Caco-2 (cell line): ENCODE measurements at regions of chr14 and their contacts with region 1.

Region 1: DNA sequence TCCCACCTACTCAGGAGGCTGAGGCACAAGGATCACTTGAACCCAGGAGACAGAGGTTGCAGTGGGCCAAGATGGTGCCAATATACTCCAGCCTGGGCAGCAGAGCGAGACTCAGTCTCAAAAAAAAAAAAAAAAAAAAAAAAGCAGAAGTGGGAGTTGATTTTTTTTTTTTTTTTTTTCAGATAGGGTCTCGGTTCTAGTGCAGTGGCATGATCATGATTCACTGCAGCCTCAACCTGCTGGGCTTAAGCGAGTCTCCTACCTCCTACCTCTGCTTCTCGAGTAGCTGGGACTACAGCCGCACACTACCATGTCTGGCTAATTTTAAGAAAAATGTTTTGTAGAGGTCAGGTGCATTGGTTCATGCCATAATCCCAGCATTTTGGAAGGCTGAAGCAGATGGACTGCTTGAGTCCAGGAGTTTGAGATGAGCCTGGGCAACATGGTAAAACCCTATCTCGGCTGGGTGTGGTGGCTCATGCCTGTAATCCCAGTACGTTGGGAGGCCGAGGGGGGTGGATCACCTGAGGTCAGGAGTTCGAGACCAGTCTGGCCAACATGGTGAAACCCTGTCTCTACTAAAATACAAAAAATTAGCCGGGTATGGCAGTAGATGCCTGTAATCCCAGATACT is 16.3 kb upstream of the HSP90AA1 start:
- DNase-seq: no peak
- H3K4me3 ChIP-seq: no peak overlapping the region
- H3K4me3 Mint-ChIP-seq: no peak overlapping the region
- H3K27ac Mint-ChIP-seq: no peak overlapping the region
- H3K4me1 ChIP-seq: peaks cover 6% of the 10 kb centered on the region
- H3K4me1 Mint-ChIP-seq: no peaks in the 10 kb centered on the region
- H3K27me3 ChIP-seq: no peaks in the 10 kb centered on the region
- H3K27me3 Mint-ChIP-seq: no peaks in the 10 kb centered on the region
- CTCF ChIP-seq: no peak

Region 2: DNA sequence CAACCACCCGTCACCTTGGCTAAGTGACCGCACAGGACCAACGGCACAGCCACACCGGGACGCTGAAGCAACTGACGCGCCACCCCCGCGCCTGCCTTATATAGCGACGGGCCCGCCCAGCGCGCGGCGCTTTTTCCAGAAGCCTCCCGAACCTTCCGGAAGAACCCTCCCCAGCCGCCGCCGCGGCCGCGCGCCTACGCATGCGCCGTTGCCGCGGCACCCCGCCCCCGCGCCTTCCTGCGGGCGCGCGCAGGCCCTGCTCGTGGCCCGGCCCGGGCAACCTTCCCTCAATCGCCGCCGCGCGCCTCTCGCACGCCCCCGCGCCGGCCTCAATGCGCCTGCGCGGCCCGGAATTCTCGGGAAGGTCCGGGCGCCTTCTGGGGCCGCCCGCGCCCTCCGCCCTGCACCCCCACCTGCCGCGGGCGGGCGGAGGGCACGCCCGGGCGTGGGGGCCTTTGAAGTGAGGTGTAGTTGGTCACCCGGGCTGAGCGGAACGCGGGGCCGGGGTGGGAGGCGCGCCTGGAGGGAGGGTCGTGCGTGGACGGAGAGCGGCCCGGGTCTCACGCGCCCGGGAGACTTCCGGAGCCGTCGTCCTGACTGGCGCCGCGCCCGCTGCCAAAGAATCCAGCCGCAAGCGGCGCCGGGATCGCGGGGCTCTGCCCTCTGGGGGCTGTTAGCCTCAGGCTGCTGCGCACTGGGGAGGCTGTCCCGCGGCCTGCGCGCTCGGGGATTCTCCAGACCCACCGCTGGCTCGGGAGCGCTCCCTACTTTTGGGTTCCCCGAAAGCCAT is 16.0 kb before region 1 on chr14 and contains the start of gene HSP90AA1:
- CTCF ChIA-PET with region 1: no interaction called
- POLR2A ChIA-PET with region 1: interaction called, 14 read pairs
- intact Hi-C with region 1: no loop called
- DNase-seq: peak; percentile 90 to 96
- H3K4me3 ChIP-seq: peak within 1 kb of the TSS; percentile 87
- H3K4me3 Mint-ChIP-seq: peak within 1 kb of the TSS; percentile 81
- H3K27ac Mint-ChIP-seq: peak within 1 kb of the TSS; percentile 71
- H3K4me1 ChIP-seq: peaks cover 29% of the 10 kb centered on the region
- H3K4me1 Mint-ChIP-seq: peaks cover 30% of the 10 kb centered on the region
- H3K27me3 ChIP-seq: no peaks in the 10 kb centered on the region
- H3K27me3 Mint-ChIP-seq: no peaks in the 10 kb centered on the region
- CTCF ChIP-seq: peak in 1 of 2 experiments; percentile 33
- total RNA-seq, gene HSP90AA1: 464 and 478 TPM in 2 replicates

Region 3: GRCh38 chr14:102139248-102140026 is 36.3 kb after region 1 on chr14 and contains the start of gene WDR20:
- CTCF ChIA-PET with region 1: no interaction called
- POLR2A ChIA-PET with region 1: interaction called, 10 read pairs
- intact Hi-C with region 1: no loop called
- DNase-seq: peak; percentile 99
- H3K4me3 ChIP-seq: peak within 1 kb of the TSS; percentile 96
- H3K4me3 Mint-ChIP-seq: peak within 1 kb of the TSS; percentile 98
- H3K27ac Mint-ChIP-seq: peak within 1 kb of the TSS; percentile 91
- H3K4me1 ChIP-seq: peaks cover 6% of the 10 kb centered on the region; the same call in 1 of the 2 replicates
- H3K4me1 Mint-ChIP-seq: peaks cover 11% of the 10 kb centered on the region
- H3K27me3 ChIP-seq: no peaks in the 10 kb centered on the region
- H3K27me3 Mint-ChIP-seq: no peaks in the 10 kb centered on the region
- CTCF ChIP-seq: peak in 1 of 2 experiments; percentile 19
- total RNA-seq, gene WDR20: 32.5 and 34.0 TPM in 2 replicates

Region 4: DNA sequence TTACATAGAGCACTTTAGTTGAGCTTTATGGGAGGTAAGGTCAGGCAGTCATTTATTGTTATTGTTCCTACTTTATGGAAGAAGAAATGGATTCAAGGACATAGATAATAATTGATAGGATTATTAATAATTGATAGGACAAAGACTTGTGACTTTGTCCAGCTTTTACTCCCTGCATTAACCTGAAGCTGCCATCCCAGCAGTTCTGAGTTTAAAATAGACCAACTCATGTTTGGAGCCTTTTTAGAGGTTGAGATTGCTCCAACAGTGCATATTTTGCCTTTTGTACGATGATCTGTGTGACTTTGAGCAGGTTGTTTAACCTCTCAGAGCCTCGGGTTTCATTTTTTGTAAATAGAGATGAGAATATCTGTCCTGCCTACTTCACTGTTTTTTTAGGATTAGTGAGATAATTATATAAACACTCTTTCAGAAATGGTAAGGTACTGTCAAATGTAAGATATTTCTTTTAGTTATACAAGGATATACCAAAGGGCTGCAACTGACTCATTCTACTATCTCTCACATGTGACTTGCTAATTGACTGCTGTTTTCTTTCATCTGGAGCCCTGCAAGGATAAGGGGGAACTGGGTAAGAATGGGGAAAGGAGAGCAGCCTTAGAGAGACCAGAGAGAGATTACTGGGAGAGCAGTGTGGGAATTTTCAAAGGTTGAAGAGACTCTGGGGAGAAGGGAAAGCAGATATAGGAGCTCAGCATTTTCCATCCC is 51.8 kb after region 1 on chr14:
- CTCF ChIA-PET with region 1: no interaction called
- POLR2A ChIA-PET with region 1: no interaction called
- intact Hi-C with region 1: no loop called
- DNase-seq: peak in 1 of 2 experiments; percentile 11
- H3K4me3 ChIP-seq: no peak overlapping the region
- H3K4me3 Mint-ChIP-seq: peak overlapping the region; percentile 29
- H3K27ac Mint-ChIP-seq: peak overlapping the region; percentile 29
- H3K4me1 ChIP-seq: peaks cover 20% of the 10 kb centered on the region
- H3K4me1 Mint-ChIP-seq: peaks cover 13% of the 10 kb centered on the region
- H3K27me3 ChIP-seq: no peaks in the 10 kb centered on the region
- H3K27me3 Mint-ChIP-seq: no peaks in the 10 kb centered on the region
- CTCF ChIP-seq: no peak